ENCODE measurements at regions of chr1 and their contacts with region 1.

Region 1: GRCh38 chr1:172357753-172358385 is 62.6 kb upstream of the C1orf105 start:
- DNase-seq: no peak
- H3K4me3 ChIP-seq: peak overlapping the region; percentile 37
- H3K27ac ChIP-seq: peak overlapping the region; percentile 85
- H3K4me1 ChIP-seq: peaks cover 63% of the 10 kb centered on the region
- H3K27me3 ChIP-seq: no peaks in the 10 kb centered on the region
- CTCF ChIP-seq: no peak

Region 2: DNA sequence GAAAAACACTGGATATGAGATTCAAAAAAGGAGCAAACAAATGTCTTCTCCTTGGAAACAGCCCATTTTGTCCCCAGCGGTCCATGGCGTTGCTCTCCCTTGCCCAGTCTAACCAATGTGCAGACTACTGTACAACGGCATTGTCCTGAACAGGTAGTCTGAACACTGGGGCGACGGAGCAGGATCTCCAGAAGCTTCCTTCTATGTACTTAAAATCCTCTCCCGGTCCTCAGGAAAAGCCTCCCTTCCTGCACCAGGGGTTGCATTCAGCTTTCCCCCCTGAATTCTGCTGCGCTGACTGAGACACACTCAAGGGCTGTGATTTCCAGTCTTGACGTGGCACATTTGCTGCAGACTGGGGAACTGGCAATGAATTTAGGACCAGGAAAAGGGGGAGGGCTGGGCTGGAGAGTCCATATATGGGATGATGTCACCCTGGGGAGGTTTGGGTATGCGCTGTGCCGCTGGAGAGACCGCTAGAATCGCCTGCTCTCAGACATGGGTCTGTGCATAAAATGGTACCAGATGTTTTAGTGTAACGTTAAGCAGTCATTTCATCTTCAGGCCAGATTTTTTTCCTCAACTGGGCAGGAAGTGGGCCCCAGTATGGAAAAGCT is 213.3 kb before region 1 on chr1:
- intact Hi-C with region 1: loop called (anchors 10 kb)
- DNase-seq: peak; percentile 71
- H3K4me3 ChIP-seq: peak overlapping the region; percentile 65
- H3K27ac ChIP-seq: peak overlapping the region; percentile 81
- H3K4me1 ChIP-seq: peaks cover 31% of the 10 kb centered on the region
- H3K27me3 ChIP-seq: no peaks in the 10 kb centered on the region
- CTCF ChIP-seq: no peak

Region 3: GRCh38 chr1:172429331-172430127 is 71.7 kb after region 1 on chr1:
- intact Hi-C with region 1: loop called (anchors 10 kb)
- DNase-seq: no peak
- H3K4me3 ChIP-seq: no peak overlapping the region
- H3K27ac ChIP-seq: no peak overlapping the region
- H3K4me1 ChIP-seq: no peaks in the 10 kb centered on the region
- H3K27me3 ChIP-seq: no peaks in the 10 kb centered on the region
- CTCF ChIP-seq: peak; percentile 74